Transverse colon (tissue), 4 donors: ENCODE measurements at regions of chr2 and their contacts with region 1.

Region 1: GRCh38 chr2:240434728-240435456 is 571 bp upstream of the GPC1 start:
- DNase-seq: peak; percentile 91
- H3K4me3 ChIP-seq: peak overlapping the region; percentile 32 to 86 (median 76)
- H3K27ac ChIP-seq: peak overlapping the region; percentile 84 to 94 (median 92)
- H3K4me1 ChIP-seq: peaks cover 14 to 36% (median 22%) of the 10 kb centered on the region in 4 donors
- H3K27me3 ChIP-seq: peaks cover 22% of the 10 kb centered on the region
- CTCF ChIP-seq: no peak
- EP300 ChIP-seq: no peak
- POLR2A ChIP-seq: no peak

Region 2: DNA sequence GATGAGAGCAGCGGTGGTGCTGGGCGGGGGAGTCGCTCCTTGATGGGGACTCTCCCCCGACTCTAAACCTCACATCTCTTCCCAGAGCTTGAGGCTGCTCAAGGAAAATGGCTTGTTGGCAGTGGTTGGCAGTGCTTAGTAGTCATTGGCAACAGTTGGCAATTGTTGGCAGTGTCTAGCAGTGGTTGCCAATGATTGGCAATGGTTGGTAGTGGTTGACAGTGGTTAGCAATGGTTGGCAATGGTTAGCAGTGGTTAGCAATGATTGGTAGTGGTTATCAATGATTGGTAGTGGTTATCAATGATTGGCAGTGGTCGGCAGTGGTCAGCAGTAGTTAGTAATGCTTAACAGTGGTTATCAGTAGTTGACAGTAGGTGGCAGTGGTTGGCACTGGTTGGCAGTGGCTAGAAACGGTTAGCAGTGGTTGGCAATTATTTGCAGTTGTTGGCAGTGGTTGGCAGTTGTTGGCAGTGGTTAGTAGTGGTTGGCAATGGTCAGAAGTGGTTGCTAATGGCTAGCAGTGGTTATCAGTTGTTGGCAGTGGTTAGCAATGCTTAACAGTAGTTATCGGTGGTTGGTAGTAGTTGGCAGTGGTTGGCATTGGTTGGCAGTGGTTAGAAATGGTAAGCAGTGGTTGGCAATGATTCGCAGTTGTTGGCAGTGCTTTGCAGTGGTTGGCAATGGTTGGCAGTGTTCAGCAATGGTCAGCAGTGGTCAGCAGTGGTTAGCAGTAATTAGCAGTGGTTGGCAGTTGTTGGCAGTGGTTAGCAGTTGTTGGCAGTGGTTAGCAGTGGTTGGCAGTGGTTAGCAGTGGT is 209.0 kb before region 1 on chr2:
- in situ Hi-C with region 1: loop called (anchors 10 to 25 kb)
- intact Hi-C with region 1: no loop called
- DNase-seq: no peak
- H3K4me3 ChIP-seq: no peak overlapping the region
- H3K27ac ChIP-seq: no peak overlapping the region
- H3K4me1 ChIP-seq: no peaks in the 10 kb centered on the region
- H3K27me3 ChIP-seq: peaks cover 26% of the 10 kb centered on the region
- CTCF ChIP-seq: peak in 1 of 5 experiments; percentile 3
- EP300 ChIP-seq: no peak
- POLR2A ChIP-seq: no peak

Region 3: DNA sequence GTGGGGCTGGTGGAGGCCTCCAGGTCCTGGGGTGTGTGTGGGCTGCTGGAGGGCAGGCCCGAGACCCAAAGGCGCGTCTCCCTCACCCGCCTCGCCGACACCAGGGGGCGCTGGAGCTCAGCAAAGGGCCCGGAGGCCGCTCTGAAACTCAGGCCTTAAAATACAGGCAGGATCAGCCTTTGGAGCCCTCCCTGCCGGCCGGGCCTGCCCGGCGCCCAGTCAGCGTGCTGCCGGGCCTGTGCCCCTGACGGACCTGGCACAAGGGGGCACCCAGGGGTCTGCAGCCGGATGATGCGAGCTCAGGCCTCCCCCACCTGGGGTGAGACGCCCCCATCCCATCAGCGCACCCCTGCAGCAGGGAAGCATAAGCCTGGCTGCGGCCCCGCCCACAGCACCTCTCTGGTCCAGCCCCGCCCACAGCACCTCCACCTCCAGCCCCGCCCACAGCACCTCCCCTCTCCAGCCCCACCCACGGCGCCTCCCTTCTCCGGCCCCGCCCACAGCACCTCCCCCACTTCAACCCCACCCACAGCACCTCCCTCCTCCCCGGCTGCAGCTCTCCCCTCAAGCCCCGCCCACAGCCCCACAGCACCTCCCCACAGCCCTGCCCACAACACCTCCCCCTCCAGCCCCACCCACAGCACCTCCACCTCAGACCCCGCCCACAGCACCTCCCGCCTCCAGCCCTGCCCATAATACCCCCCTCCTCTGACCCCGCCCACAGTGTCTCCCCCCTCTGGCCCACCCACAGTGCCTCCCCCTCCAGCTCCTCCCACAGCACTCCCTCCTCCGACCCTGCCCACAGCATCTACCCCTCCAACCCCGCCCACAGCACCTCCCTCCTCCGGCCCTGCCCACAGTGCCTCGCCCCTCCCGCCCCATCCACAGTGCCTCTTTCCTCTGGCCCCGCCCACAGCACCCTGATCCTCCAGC is 201.7 kb before region 1 on chr2:
- in situ Hi-C with region 1: loop called (anchors 10 to 25 kb)
- intact Hi-C with region 1: loop called (anchors 2 kb)
- DNase-seq: peak; percentile 82
- H3K4me3 ChIP-seq: peak overlapping the region in 2 of 4 donors; percentile 15 to 29
- H3K27ac ChIP-seq: peak overlapping the region in 3 of 4 donors; percentile 7 to 71 (median 33)
- H3K4me1 ChIP-seq: peaks cover 0 to 16% (median 7%) of the 10 kb centered on the region in 4 donors
- H3K27me3 ChIP-seq: no peaks in the 10 kb centered on the region
- CTCF ChIP-seq: peak; percentile 76 to 87 (median 78)
- EP300 ChIP-seq: no peak
- POLR2A ChIP-seq: no peak